BJ (cell line): ENCODE measurements at regions of chr2 and their contacts with region 1.

Region 1: DNA sequence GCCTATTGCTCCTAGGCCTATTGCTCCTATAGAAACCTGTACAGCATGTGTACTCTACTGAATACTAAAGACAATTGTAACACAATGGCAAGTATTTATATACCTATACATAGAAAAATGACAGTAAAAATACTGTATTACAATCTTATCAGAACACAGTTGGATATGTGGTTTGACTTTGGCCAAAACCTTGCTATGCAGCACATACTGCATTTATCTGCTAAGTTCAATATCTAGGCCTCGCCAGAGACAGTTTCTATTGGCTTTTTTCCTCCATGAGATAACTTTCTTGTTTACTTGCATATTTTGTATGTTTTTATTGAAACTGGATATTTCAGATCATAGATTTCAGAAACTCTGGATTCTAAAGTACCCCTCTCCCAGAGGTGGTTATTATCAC is 19.3 kb upstream of the TMEM87B start:
- DNase-seq: no peak
- H3K4me3 ChIP-seq: no peak overlapping the region
- H3K27me3 ChIP-seq: no peaks in the 10 kb centered on the region; the same call in 1 of the 2 replicates
- CTCF ChIP-seq: no peak

Region 2: DNA sequence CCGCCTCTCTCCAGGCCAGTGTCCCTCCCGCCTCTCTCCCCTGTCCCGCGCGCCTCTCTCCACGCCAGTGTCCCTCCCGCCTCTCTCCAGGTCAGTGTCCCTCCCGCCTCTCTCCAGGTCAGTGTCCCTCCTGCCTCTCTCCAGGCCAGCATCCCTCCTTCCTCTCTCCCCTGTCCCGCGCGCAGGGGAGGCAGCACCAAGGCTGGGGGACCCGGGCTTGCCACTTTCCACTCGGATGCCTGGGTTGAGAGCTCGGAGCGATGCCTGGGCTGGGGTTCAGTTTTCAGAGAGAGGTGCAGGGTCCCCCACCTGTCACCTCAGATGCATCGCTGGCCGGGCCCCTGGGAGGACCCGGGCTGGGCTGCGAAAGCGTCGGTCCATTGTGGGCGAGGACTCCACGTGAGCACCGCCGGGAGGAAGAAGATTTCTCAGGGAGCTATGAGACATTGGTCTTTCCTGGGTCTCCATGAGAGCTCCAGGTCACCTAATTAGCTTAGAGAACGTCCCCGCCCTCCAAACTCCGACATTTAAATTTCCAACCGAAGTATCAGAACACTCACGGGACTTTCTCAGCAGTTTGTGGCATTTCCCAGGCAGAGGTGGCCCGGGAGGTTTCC is 104.5 kb after region 1 on chr2:
- CTCF ChIA-PET with region 1: no interaction called
- POLR2A ChIA-PET with region 1: interaction called, 23 read pairs
- DNase-seq: no peak
- H3K4me3 ChIP-seq: peak overlapping the region; percentile 15; the same call in 1 of the 2 replicates
- H3K27me3 ChIP-seq: no peaks in the 10 kb centered on the region
- CTCF ChIP-seq: no peak

Region 3: DNA sequence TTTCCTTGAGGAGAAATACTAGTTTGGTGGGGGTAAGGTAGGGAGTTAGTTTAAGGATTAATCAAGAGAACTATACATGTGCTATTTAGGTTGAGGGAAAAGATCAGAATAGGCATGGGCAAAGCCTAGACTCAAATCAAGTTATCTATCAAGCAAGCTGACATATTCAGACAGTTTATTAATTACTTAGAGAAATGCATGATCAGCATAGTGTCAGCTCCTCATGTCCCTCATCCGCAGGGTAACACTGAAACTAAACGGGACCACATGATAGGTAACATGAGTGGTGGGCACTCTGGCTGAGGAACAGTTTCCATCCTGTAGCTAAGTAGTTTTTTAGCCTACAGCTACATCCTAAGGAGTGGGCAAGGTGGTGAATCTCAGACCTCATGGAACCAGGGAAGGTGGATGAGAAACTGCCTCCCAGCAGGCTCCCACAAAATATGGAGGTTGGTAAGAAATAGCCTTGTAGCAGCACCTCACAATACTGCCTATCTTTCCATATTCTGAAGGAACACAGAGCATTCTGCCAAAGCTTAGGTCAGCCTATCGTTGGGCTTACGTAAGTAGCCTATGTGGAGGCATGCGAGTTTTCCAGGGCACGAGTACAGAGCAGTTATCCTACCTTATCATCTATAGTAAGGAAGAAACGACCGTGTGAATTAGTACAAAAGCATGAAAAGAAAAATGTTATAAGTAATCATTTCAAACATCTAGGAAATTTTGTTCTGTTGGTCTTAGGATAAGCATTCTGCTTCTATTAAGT is 258.0 kb after region 1 on chr2:
- CTCF ChIA-PET with region 1: no interaction called
- POLR2A ChIA-PET with region 1: no interaction called
- DNase-seq: no peak
- H3K4me3 ChIP-seq: no peak overlapping the region
- H3K27me3 ChIP-seq: no peaks in the 10 kb centered on the region
- CTCF ChIP-seq: no peak